ENCODE measurements at regions of chr13 and their contacts with region 1.

Region 1: GRCh38 chr13:33642374-33643068 is 175.4 kb upstream of the RFC3 start:
- DNase-seq: peak; percentile 99
- ATAC-seq: peak; percentile 97
- H3K4me3 ChIP-seq: peak overlapping the region in 2 of 3 experiments; percentile 27 to 45; a peak in 3 of 6 replicates
- H3K27ac ChIP-seq: peak overlapping the region; percentile 97
- H3K4me1 ChIP-seq: peaks cover 90% of the 10 kb centered on the region
- H3K27me3 ChIP-seq: no peaks in the 10 kb centered on the region
- CTCF ChIP-seq: no peak
- EP300 ChIP-seq: peak; percentile 94 to 98
- POLR2A ChIP-seq: peak in 1 of 2 experiments; percentile 57; a peak in 2 of 4 replicates
- RAD21 ChIP-seq: no peak

Region 2: GRCh38 chr13:33610471-33611015 is 32.0 kb before region 1 on chr13:
- CTCF ChIA-PET with region 1: no interaction called
- POLR2A ChIA-PET with region 1: interaction called, 47 read pairs
- in situ Hi-C with region 1: no loop called
- intact Hi-C with region 1: loop called (anchors 1 kb)
- DNase-seq: peak; percentile 95
- ATAC-seq: peak; percentile 94
- H3K4me3 ChIP-seq: peak overlapping the region; percentile 55 to 70 (median 59)
- H3K27ac ChIP-seq: peak overlapping the region; percentile 99
- H3K4me1 ChIP-seq: peaks cover 62% of the 10 kb centered on the region
- H3K27me3 ChIP-seq: no peaks in the 10 kb centered on the region
- CTCF ChIP-seq: peak; percentile 58
- EP300 ChIP-seq: no peak
- POLR2A ChIP-seq: peak; percentile 66 to 72
- RAD21 ChIP-seq: peak; percentile 52

Region 3: GRCh38 chr13:33678906-33679657 is 36.6 kb after region 1 on chr13:
- CTCF ChIA-PET with region 1: no interaction called
- POLR2A ChIA-PET with region 1: interaction called, 127 read pairs
- in situ Hi-C with region 1: loop called (anchors 5 kb)
- intact Hi-C with region 1: loop called (anchors 1 kb)
- DNase-seq: peak; percentile 97
- ATAC-seq: peak; percentile 97
- H3K4me3 ChIP-seq: peak overlapping the region; percentile 26 to 62 (median 52); a peak in 5 of 6 replicates
- H3K27ac ChIP-seq: peak overlapping the region; percentile 99
- H3K4me1 ChIP-seq: peaks cover 85% of the 10 kb centered on the region
- H3K27me3 ChIP-seq: no peaks in the 10 kb centered on the region; a peak in 2 of 5 replicates
- CTCF ChIP-seq: 0 out of 2 replicates have a peak, but pooled peaks have one; percentile 4
- EP300 ChIP-seq: peak; percentile 20 to 85; a peak in 2 of 4 replicates
- POLR2A ChIP-seq: peak; percentile 81 to 88
- RAD21 ChIP-seq: peak; percentile 41

Measured in HepG2 (cell line).